Natural killer cell (primary cell): ENCODE measurements at regions of chr1 and their contacts with region 1.

Region 1: DNA sequence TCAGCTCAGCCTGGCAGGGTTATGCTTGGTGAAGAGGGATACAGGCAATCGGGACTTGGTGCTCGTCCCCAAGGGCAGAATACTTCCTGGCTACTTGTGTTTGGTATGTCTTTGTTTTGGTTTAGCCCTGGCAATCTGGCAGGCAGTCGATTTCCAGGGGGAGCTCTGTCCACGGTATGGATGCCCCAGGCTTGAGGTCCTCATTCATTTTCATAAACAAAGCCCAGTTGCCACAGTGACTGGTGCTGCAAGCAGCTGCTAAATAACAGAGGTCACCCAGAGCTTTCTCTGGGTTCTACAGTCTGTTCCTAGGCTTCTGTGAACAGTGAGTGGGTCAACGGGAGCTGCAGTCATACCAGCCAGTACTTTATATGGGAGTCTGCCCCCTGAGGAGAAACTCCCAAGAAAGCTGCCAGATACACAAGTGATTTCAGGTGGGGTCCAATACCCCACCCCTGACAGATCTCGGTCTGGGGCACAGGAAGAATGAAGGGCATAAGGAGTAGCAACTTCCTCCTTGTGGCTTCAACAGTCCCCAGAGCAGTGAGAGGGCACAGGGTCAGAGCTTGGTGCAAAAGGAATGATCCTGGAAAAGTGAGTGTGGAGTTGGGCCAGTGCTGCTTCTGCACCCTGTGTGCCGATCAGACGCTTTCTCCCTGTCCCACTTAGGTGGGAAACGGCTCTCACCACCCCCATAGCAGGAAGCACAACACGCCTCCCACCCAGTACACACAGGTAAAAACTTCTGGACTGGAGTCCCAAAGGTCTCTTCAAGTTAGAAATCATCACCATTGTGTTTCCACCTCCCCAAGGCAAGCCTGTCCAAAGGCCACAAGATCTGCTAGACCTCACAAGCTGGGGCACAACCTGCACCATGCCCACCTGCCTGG is 55.5 kb downstream of the TGFBR3 start:
- DNase-seq: no peak
- ATAC-seq: peak; percentile 25 to 39 (median 38)
- H3K4me3 ChIP-seq: no peak overlapping the region
- H3K4me3 Mint-ChIP-seq: peak overlapping the region; percentile 65
- H3K27ac ChIP-seq: peak overlapping the region; percentile 22
- H3K27ac Mint-ChIP-seq: peak overlapping the region; percentile 92 to 95
- H3K4me1 ChIP-seq: peaks cover 41% of the 10 kb centered on the region
- H3K4me1 Mint-ChIP-seq: peaks cover 80 to 84% of the 10 kb centered on the region in 2 donors
- H3K27me3 ChIP-seq: no peaks in the 10 kb centered on the region
- H3K27me3 Mint-ChIP-seq: no peaks in the 10 kb centered on the region
- CTCF ChIP-seq: no peak

Region 2: GRCh38 chr1:91864017-91864700 is 33.7 kb after region 1 on chr1:
- intact Hi-C with region 1: loop called (anchors 5 kb)
- DNase-seq: no peak
- ATAC-seq: peak in 1 of 3 donors; percentile 27
- H3K4me3 ChIP-seq: no peak overlapping the region
- H3K4me3 Mint-ChIP-seq: peak overlapping the region; percentile 47
- H3K27ac ChIP-seq: peak overlapping the region; percentile 5
- H3K27ac Mint-ChIP-seq: peak overlapping the region; percentile 79 to 85
- H3K4me1 ChIP-seq: peaks cover 33% of the 10 kb centered on the region
- H3K4me1 Mint-ChIP-seq: peaks cover 71 to 83% of the 10 kb centered on the region in 2 donors
- H3K27me3 ChIP-seq: no peaks in the 10 kb centered on the region
- H3K27me3 Mint-ChIP-seq: no peaks in the 10 kb centered on the region
- CTCF ChIP-seq: no peak

Region 3: GRCh38 chr1:91876040-91876470 is 45.6 kb after region 1 on chr1:
- intact Hi-C with region 1: loop called (anchors 5 kb)
- DNase-seq: peak; percentile 55 to 65
- ATAC-seq: peak; percentile 69 to 84 (median 82)
- H3K4me3 ChIP-seq: no peak overlapping the region
- H3K4me3 Mint-ChIP-seq: peak overlapping the region; percentile 68
- H3K27ac ChIP-seq: peak overlapping the region; percentile 12
- H3K27ac Mint-ChIP-seq: peak overlapping the region; percentile 85 to 91
- H3K4me1 ChIP-seq: peaks cover 75% of the 10 kb centered on the region
- H3K4me1 Mint-ChIP-seq: peaks cover 85 to 93% of the 10 kb centered on the region in 2 donors
- H3K27me3 ChIP-seq: no peaks in the 10 kb centered on the region
- H3K27me3 Mint-ChIP-seq: no peaks in the 10 kb centered on the region
- CTCF ChIP-seq: no peak

Region 4: DNA sequence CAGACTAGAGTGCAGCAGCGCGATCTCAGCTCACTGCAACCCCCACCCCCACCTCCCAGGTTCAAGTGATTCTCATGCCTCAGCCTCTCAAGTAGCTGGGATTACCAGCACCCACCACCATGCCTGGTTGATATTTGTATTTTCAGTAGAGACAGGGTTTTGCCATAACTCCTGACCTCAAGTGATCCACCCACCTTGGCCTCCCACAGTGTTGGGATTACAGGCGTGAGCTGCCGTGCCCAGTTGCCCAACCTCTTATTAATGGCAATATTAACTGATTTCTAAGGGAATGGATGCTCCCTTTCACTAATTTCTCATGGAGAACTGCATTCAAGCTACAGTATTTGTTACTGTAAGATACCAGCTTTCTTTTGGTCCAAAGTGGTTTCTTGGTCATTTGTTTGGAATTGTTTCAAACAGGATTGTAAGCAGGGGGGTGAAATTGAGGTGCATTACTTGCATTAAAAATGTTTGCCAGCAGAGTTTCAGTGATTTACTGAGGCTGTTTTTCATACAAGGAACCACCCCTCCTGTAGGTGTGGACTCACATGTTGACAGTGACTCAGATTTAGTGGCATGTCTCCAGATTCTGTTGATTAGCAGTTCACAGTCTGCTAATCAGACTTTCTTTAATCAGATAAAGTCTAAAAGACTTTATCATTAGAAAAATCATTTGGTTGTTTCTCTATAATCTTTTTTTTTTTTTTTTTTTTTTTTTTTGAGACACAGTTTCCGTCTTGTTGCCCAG is 59.4 kb after region 1 on chr1:
- intact Hi-C with region 1: no loop called
- DNase-seq: peak in 1 of 2 donors; percentile 48
- ATAC-seq: peak in 2 of 3 donors; percentile 28 to 42
- H3K4me3 ChIP-seq: no peak overlapping the region
- H3K4me3 Mint-ChIP-seq: no peak overlapping the region
- H3K27ac ChIP-seq: no peak overlapping the region
- H3K27ac Mint-ChIP-seq: no peak overlapping the region
- H3K4me1 ChIP-seq: peaks cover 22% of the 10 kb centered on the region
- H3K4me1 Mint-ChIP-seq: peaks cover 36 to 37% of the 10 kb centered on the region in 2 donors
- H3K27me3 ChIP-seq: no peaks in the 10 kb centered on the region
- H3K27me3 Mint-ChIP-seq: no peaks in the 10 kb centered on the region
- CTCF ChIP-seq: no peak